ENCODE measurements at regions of chr2 and their contacts with region 1.

Region 1: GRCh38 chr2:190938771-190939335 is 58.2 kb downstream of the GLS start:
- DNase-seq: no peak
- ATAC-seq: no peak
- H3K4me3 ChIP-seq: no peak overlapping the region
- H3K27ac ChIP-seq: no peak overlapping the region
- H3K4me1 ChIP-seq: peaks cover 0 to 6% of the 10 kb centered on the region in 2 donors
- H3K27me3 ChIP-seq: no peaks in the 10 kb centered on the region

Region 2: GRCh38 chr2:190904640-190905261 is 34.1 kb before region 1 on chr2:
- intact Hi-C with region 1: loop called in 1 of 2 experiments (anchors 5 kb)
- DNase-seq: no peak
- ATAC-seq: no peak
- H3K4me3 ChIP-seq: no peak overlapping the region
- H3K27ac ChIP-seq: peak overlapping the region in 1 of 2 donors; percentile 14
- H3K4me1 ChIP-seq: no peaks in the 10 kb centered on the region
- H3K27me3 ChIP-seq: no peaks in the 10 kb centered on the region

Region 3: GRCh38 chr2:191103774-191104173 is 164.9 kb after region 1 on chr2:
- intact Hi-C with region 1: no loop called
- DNase-seq: no peak
- ATAC-seq: no peak
- H3K4me3 ChIP-seq: no peak overlapping the region
- H3K27ac ChIP-seq: no peak overlapping the region
- H3K4me1 ChIP-seq: no peaks in the 10 kb centered on the region
- H3K27me3 ChIP-seq: no peaks in the 10 kb centered on the region

Measured in aorta (tissue), 5 donors.